H1 (cell line): ENCODE measurements at regions of chr2 and their contacts with region 1.

Region 1: GRCh38 chr2:216666461-216667233 is 28.7 kb downstream of the IGFBP5 start:
- DNase-seq: peak; percentile 71 to 92
- H3K4me3 ChIP-seq: no peak overlapping the region; a peak in 1 of 8 replicates
- H3K27ac ChIP-seq: no peak overlapping the region
- H3K4me1 ChIP-seq: peaks cover 0 to 13% (median 10%) of the 10 kb centered on the region in 4 experiments; a peak in 6 of 7 replicates
- H3K27me3 ChIP-seq: no peaks in the 10 kb centered on the region
- CTCF ChIP-seq: peak; percentile 90 to 100 (median 98)
- EP300 ChIP-seq: no peak
- POLR2A ChIP-seq: no peak
- RAD21 ChIP-seq: peak; percentile 100

Region 2: DNA sequence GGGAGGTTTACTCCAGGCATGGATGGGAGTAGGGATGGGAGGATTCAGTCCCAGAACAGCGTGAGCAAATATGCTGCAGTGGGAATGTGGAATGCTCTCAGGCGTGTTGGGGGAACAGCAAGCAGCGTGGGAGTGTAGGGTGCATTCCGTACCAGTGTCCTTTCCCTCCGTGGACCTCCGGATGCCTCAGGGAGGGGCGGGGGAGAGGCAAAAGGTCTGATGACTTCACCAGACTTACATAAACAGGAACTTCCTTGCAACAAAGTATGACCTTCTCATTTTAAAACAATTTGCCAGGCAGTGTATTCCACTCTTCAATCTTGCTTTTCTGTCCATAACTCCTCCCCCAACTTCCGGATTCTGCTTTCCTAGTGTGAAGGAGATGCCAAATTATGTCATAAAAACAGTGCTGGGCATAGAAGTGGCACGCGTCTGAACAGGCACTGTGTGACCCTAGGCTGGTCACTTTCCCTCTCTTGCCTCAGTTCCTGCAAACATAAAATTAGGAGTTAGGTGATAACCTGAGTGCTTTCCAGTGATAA is 131.1 kb before region 1 on chr2:
- CTCF ChIA-PET with region 1: interaction called, 24 read pairs
- POLR2A ChIA-PET with region 1: no interaction called
- DNase-seq: no peak
- H3K4me3 ChIP-seq: no peak overlapping the region
- H3K27ac ChIP-seq: no peak overlapping the region
- H3K4me1 ChIP-seq: no peaks in the 10 kb centered on the region; a peak in 1 of 7 replicates
- H3K27me3 ChIP-seq: no peaks in the 10 kb centered on the region; a peak in 1 of 7 replicates
- CTCF ChIP-seq: no peak
- EP300 ChIP-seq: no peak
- POLR2A ChIP-seq: no peak
- RAD21 ChIP-seq: no peak

Region 3: GRCh38 chr2:216551234-216551633 is 115.4 kb before region 1 on chr2:
- CTCF ChIA-PET with region 1: interaction called, 11 read pairs
- POLR2A ChIA-PET with region 1: no interaction called
- DNase-seq: no peak
- H3K4me3 ChIP-seq: no peak overlapping the region
- H3K27ac ChIP-seq: no peak overlapping the region
- H3K4me1 ChIP-seq: peaks cover 7 to 14% (median 9%) of the 10 kb centered on the region in 4 experiments
- H3K27me3 ChIP-seq: no peaks in the 10 kb centered on the region
- CTCF ChIP-seq: no peak
- EP300 ChIP-seq: no peak
- POLR2A ChIP-seq: no peak
- RAD21 ChIP-seq: no peak

Region 4: GRCh38 chr2:216619411-216620393 is 46.9 kb before region 1 on chr2:
- CTCF ChIA-PET with region 1: interaction called, 20 read pairs
- POLR2A ChIA-PET with region 1: interaction called, 3 read pairs
- DNase-seq: peak in 1 of 2 experiments; percentile 57
- H3K4me3 ChIP-seq: no peak overlapping the region
- H3K27ac ChIP-seq: no peak overlapping the region; the same call in 1 of the 2 replicates
- H3K4me1 ChIP-seq: peaks cover 10 to 17% (median 14%) of the 10 kb centered on the region in 4 experiments
- H3K27me3 ChIP-seq: no peaks in the 10 kb centered on the region; a peak in 1 of 7 replicates
- CTCF ChIP-seq: no peak
- EP300 ChIP-seq: no peak
- POLR2A ChIP-seq: no peak
- RAD21 ChIP-seq: no peak

Region 5: GRCh38 chr2:216679221-216680019 is 12.8 kb after region 1 on chr2:
- CTCF ChIA-PET with region 1: interaction called, 30 read pairs
- POLR2A ChIA-PET with region 1: interaction called, 3 read pairs
- DNase-seq: no peak
- H3K4me3 ChIP-seq: no peak overlapping the region
- H3K27ac ChIP-seq: no peak overlapping the region
- H3K4me1 ChIP-seq: peaks cover 0 to 4% (median 2%) of the 10 kb centered on the region in 4 experiments; a peak in 4 of 7 replicates
- H3K27me3 ChIP-seq: no peaks in the 10 kb centered on the region
- CTCF ChIP-seq: no peak
- EP300 ChIP-seq: no peak
- POLR2A ChIP-seq: no peak
- RAD21 ChIP-seq: no peak

Region 6: DNA sequence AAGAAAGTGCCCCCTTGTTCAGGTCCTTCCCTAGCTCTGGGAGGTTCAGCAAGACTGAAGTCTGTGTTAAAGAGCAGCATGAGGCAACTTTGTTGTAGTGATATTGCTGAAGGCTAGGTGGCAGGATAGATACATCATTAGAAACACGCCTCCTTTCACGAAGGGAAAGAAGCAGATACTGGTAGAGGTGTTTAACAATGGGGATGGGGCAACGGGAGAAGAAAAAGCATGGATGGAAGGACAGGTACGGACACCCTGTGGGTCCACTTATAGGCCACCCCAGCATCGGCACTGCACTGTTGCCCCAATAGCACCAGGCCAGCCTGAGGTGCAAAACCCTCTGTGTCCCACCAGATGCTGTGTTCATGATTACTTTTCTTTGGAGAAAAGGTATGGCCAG is 32.2 kb after region 1 on chr2:
- CTCF ChIA-PET with region 1: interaction called, 15 read pairs
- POLR2A ChIA-PET with region 1: no interaction called
- DNase-seq: no peak
- H3K4me3 ChIP-seq: no peak overlapping the region
- H3K27ac ChIP-seq: no peak overlapping the region
- H3K4me1 ChIP-seq: peaks cover 3 to 8% (median 6%) of the 10 kb centered on the region in 4 experiments
- H3K27me3 ChIP-seq: peaks cover 0 to 14% (median 12%) of the 10 kb centered on the region in 4 experiments; a peak in 5 of 7 replicates
- CTCF ChIP-seq: peak in 2 of 3 experiments; percentile 83 to 85; a peak in 3 of 4 replicates
- EP300 ChIP-seq: no peak
- POLR2A ChIP-seq: no peak
- RAD21 ChIP-seq: peak; percentile 93 to 94